ENCODE measurements at regions of chr12 and their contacts with region 1.

Region 1: DNA sequence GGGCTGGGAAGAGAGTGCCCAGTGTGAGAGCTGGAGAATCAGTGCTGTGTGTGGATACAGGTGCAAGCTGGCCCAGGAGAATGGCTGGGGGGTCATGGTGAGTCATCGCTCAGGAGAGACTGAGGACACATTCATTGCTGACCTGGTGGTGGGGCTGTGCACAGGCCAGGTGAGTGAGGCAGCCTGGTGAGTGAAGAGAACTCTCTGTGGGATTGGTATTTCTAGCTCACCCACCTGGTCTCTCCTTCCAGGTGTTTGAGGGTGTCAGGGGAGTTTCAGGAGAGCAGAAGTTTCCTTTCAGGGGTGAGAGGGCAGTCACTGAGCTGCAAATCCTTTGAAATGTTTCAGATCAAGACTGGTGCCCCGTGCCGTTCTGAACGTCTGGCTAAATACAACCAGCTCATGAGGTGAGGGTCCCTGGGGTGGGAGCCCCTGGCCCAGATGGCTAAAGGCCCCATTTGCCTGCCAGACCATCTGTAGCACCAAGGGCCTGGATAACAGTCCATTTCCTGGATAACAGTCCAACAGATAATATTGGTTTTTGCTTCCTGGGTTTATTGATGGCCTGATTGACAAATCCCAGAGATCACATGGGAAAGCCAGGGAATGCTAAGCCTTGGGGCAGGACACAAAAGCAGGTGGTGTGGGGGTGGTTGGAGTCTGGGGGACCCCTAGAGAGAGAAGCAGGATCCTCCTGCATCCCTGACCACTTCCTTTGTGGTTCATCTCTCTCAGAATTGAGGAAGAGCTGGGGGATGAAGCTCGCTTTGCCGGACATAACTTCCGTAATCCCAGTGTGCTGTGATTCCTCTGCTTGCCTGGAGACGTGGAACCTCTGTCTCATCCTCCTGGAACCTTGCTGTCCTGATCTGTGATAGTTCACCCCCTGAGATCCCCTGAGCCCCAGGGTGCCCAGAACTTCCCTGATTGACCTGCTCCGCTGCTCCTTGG is 5.5 kb upstream of the ATN1 start:
- DNase-seq: peak in 2 of 3 donors; percentile 66 to 76
- H3K4me3 ChIP-seq: peak overlapping the region in 2 of 3 experiments; percentile 2 to 53
- H3K4me3 Mint-ChIP-seq: peak overlapping the region; percentile 67 to 92
- H3K27ac ChIP-seq: peak overlapping the region in 1 of 2 donors; percentile 7
- H3K27ac Mint-ChIP-seq: peak overlapping the region in 4 of 7 donors; percentile 54 to 70 (median 64)
- H3K4me1 ChIP-seq: peaks cover 36 to 40% of the 10 kb centered on the region in 2 donors
- H3K4me1 Mint-ChIP-seq: peaks cover 37% of the 10 kb centered on the region
- H3K27me3 ChIP-seq: peaks cover 3 to 33% of the 10 kb centered on the region in 2 donors
- H3K27me3 Mint-ChIP-seq: peaks cover 43 to 52% (median 48%) of the 10 kb centered on the region in 3 donors
- CTCF ChIP-seq: no peak

Region 2: DNA sequence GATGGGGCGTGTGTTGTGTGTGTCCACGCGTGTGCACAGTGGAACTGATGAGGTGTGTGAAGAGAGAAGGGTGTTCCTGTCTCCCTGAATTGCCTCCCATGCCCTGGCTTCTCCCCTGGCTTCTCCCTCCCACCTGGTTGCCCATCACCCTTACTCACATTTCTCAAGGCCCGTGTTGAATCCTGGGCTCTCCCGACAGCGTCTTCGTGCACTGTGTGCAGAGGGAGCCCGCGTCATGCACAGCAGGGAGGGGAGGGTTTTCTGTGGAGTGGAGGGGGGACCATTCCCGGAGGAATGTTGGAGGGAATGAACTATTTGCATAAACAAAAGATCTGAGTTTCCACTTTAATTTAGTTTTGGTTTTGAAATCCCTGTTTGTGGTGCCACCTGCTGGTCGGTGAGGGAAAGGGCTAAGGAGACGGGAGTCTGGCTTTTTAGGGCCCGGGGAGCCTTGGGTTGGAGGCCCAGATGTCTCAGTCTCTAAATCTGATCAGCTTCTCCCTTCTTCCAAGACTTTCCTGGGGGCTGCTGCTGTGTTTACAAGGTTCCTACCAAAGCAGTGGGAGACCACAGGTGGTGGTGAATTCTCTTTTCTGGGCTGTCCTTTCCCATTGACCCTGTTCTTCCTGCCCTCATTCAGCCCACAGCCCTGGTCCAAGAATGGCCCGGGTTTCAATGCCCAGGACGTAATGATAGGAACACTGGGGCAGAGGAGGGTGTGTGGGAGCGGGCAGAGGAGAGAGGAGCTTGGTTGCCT is 170.1 kb after region 1 on chr12 and contains the start of gene C1R:
- intact Hi-C with region 1: loop called (anchors 5 kb)
- DNase-seq: peak; percentile 29 to 49 (median 41)
- H3K4me3 ChIP-seq: peak within 1 kb of the TSS; percentile 36 to 79 (median 62)
- H3K4me3 Mint-ChIP-seq: peak within 1 kb of the TSS; percentile 89 to 98
- H3K27ac ChIP-seq: peak within 1 kb of the TSS in 1 of 2 donors; percentile 55
- H3K27ac Mint-ChIP-seq: peak within 1 kb of the TSS in 5 of 7 donors; percentile 71 to 91 (median 80)
- H3K4me1 ChIP-seq: peaks cover 0 to 3% of the 10 kb centered on the region in 2 donors
- H3K4me1 Mint-ChIP-seq: peaks cover 9% of the 10 kb centered on the region
- H3K27me3 ChIP-seq: peaks cover 0 to 2% of the 10 kb centered on the region in 2 donors
- H3K27me3 Mint-ChIP-seq: peaks cover 6 to 17% (median 12%) of the 10 kb centered on the region in 3 donors
- CTCF ChIP-seq: peak; percentile 90
- polyA plus RNA-seq, gene C1R: 0.14 to 0.88 TPM in 2 of 3 donors, not detected in the other

Region 3: DNA sequence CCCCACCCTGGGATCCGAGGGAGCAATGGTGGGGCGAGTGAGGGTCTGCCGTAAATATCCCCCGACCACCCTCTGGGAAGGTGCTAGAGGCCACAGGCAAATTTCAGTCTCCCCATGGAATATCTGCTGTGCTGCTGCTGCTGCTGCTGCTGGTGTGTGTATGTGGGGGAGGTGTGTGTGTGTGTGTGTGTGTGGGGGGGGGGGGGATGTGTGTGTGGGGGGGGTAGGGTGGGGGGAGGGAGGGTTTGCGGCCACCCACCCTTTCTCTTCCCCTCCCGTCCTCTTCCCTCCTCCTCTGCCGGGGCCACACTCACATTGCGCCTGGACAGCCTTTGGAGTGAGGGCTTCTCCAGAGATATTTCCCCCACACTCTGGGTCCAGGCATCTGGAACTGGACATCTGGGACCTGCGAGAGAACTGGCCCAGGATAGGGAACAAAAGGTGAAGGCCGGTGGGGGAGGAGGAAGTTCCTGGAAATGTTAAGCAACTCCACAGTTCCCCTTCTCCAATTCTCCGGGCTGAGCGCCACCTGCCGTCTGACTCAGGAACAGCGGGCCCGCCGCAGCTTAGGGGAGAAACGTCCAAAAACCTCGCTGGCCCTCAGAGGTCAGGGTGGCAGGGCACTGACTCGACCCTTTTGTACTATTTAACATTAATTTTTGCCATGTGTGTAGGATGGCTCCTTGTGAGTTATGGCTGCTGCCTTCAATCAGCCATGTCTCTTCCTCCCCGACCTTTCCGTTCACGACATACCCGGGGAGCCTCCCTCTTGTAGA is 186.7 kb after region 1 on chr12 and contains the start of gene C1RL:
- intact Hi-C with region 1: loop called (anchors 5 kb)
- DNase-seq: peak; percentile 75 to 87 (median 85)
- H3K4me3 ChIP-seq: peak within 1 kb of the TSS; percentile 60 to 85 (median 79)
- H3K4me3 Mint-ChIP-seq: peak within 1 kb of the TSS; percentile 86 to 95
- H3K27ac ChIP-seq: peak within 1 kb of the TSS; percentile 72 to 77
- H3K27ac Mint-ChIP-seq: peak within 1 kb of the TSS; percentile 88 to 97 (median 92)
- H3K4me1 ChIP-seq: peaks cover 18 to 19% of the 10 kb centered on the region in 2 donors
- H3K4me1 Mint-ChIP-seq: peaks cover 33% of the 10 kb centered on the region
- H3K27me3 ChIP-seq: no peaks in the 10 kb centered on the region
- H3K27me3 Mint-ChIP-seq: peaks cover 0 to 2% (median 0%) of the 10 kb centered on the region in 3 donors
- CTCF ChIP-seq: peak; percentile 95
- polyA plus RNA-seq, gene C1RL: 4.8 to 27.9 (median 5.6) TPM